HepG2 (cell line): ENCODE measurements at regions of chr13 and their contacts with region 1.

Region 1: DNA sequence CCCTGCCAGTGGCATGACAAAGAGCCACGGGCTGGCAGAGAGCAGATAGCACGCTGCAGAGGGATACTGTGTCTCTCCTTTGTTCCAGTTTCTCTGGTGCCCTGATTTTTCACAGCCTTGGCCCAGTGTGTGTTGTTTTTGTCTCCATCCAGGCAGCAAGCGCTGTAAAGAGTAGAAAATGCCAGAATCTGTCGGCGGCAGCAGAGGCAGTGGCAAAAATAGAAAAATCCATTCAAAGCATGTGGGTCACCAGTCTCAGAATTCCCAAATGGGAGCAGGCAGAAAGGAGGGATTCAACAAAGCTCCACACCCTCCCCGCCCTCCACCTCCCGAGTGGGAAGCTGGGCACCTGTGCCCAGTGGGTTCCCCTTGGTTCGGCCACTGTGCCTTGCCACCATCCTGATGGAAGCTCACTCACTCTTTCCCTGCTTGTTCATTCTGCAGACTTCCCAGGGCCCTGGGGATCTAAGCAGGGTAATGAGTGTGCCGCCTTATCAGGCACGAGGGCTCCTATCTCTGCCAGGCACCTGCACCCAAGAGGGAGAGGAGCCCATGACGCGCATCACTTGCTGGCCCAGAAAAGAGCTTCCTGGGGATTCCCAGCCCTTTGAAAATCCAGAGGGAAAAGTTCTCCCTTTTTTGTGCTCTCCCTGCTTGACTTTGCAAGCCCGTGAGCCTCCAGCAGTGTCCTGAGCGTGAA is 416.9 kb downstream of the IRS2 start:
- DNase-seq: no peak
- ATAC-seq: no peak
- H3K4me3 ChIP-seq: no peak overlapping the region
- H3K27ac ChIP-seq: no peak overlapping the region
- H3K4me1 ChIP-seq: no peaks in the 10 kb centered on the region
- H3K27me3 ChIP-seq: no peaks in the 10 kb centered on the region
- CTCF ChIP-seq: no peak
- EP300 ChIP-seq: no peak
- POLR2A ChIP-seq: no peak
- RAD21 ChIP-seq: no peak

Region 2: GRCh38 chr13:108834193-108834592 is 535.3 kb before region 1 on chr13:
- CTCF ChIA-PET with region 1: no interaction called
- POLR2A ChIA-PET with region 1: no interaction called
- in situ Hi-C with region 1: no loop called
- intact Hi-C with region 1: loop called (anchors 5 kb)
- DNase-seq: no peak
- ATAC-seq: no peak
- H3K4me3 ChIP-seq: no peak overlapping the region
- H3K27ac ChIP-seq: no peak overlapping the region
- H3K4me1 ChIP-seq: no peaks in the 10 kb centered on the region
- H3K27me3 ChIP-seq: no peaks in the 10 kb centered on the region
- CTCF ChIP-seq: no peak
- EP300 ChIP-seq: no peak
- POLR2A ChIP-seq: no peak
- RAD21 ChIP-seq: no peak

Region 3: DNA sequence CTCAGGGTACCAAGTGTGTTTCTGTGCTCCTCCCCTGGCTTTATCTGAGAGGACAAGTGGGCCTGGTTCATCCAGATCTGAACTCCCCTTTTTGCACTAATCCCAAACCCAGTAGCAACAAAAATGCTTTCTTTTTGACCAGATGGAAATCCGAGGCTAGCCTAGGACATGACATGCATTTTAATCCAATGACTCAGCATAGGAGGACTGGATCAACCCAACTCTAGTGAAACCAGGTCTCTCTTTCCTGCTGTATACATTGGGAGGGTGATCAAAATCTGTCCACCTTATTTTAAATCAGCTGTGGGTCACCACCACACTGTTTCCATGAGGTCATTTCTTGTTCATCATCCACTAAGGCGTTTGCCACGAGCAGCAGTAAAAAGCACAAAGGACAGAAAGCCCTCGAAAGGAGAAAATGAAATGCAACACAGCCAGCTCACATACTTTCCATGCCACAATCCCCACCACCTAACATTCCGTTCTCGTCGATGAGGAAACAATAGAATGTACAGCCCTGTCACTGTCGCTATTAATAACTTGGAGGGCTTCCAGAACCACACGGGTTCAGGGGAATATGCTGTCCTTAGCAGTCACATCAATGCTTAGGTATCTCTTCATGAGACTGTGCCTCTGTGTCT is 126.1 kb before region 1 on chr13:
- CTCF ChIA-PET with region 1: no interaction called
- POLR2A ChIA-PET with region 1: no interaction called
- in situ Hi-C with region 1: no loop called
- intact Hi-C with region 1: no loop called
- DNase-seq: no peak
- ATAC-seq: no peak
- H3K4me3 ChIP-seq: no peak overlapping the region
- H3K27ac ChIP-seq: no peak overlapping the region
- H3K4me1 ChIP-seq: no peaks in the 10 kb centered on the region
- H3K27me3 ChIP-seq: no peaks in the 10 kb centered on the region; a peak in 1 of 5 replicates
- CTCF ChIP-seq: no peak
- EP300 ChIP-seq: no peak
- POLR2A ChIP-seq: no peak
- RAD21 ChIP-seq: no peak

Region 4: GRCh38 chr13:109548374-109548773 is 178.9 kb after region 1 on chr13:
- CTCF ChIA-PET with region 1: no interaction called
- POLR2A ChIA-PET with region 1: no interaction called
- in situ Hi-C with region 1: no loop called
- intact Hi-C with region 1: no loop called
- DNase-seq: no peak
- ATAC-seq: no peak
- H3K4me3 ChIP-seq: no peak overlapping the region
- H3K27ac ChIP-seq: no peak overlapping the region
- H3K4me1 ChIP-seq: no peaks in the 10 kb centered on the region
- H3K27me3 ChIP-seq: no peaks in the 10 kb centered on the region
- CTCF ChIP-seq: no peak
- EP300 ChIP-seq: no peak
- POLR2A ChIP-seq: no peak
- RAD21 ChIP-seq: no peak